AG04449 (cell line): ENCODE measurements at regions of chr3 and their contacts with region 1.

Region 1: GRCh38 chr3:154252759-154253638 is 71.3 kb downstream of the DHX36 start:
- DNase-seq: peak; percentile 42
- H3K4me3 ChIP-seq: no peak overlapping the region
- CTCF ChIP-seq: peak; percentile 90

Region 2: GRCh38 chr3:154095832-154096421 is 157.1 kb before region 1 on chr3:
- CTCF ChIA-PET with region 1: interaction called, 46 read pairs
- POLR2A ChIA-PET with region 1: no interaction called
- DNase-seq: peak; percentile 14
- H3K4me3 ChIP-seq: no peak overlapping the region
- CTCF ChIP-seq: peak; percentile 18

Region 3: DNA sequence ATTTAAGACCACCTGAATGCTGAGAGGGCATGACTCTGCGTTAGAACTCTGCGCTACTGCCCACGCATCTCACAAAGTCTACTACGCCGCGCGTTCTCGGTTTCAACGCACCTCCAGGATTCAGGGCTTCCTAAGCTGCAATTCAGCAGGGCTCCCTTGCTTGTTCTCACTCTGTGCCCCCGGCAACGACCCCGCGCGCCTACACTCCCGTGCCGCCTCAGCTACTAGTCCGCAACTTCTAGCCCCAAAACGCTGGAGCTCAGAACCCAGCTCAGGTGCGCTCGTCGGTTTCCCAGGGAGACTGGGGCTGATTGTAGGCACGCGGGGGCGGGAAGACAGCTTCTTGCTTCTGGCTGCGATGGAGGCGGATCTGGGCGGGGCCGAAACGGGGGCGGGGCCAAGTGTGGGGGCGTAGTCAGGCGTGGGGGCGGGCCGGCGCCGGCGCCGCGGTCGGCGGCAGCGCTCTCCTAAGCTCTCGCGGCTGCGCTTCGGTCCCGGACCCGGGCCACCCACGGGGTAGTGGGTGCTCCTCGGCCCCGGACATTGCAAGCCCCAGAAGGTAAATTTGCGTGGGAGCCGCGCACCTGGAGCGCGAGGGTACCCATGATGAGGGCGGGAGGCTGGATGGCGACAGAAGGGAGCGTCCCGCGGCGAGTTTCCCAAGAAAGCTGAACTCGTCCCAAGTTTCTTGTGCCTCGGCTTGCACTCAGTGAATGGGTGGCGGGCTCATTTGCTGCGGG is 131.9 kb before region 1 on chr3 and contains the start of gene ARHGEF26:
- CTCF ChIA-PET with region 1: interaction called, 12 read pairs
- POLR2A ChIA-PET with region 1: no interaction called
- DNase-seq: no peak
- H3K4me3 ChIP-seq: peak within 1 kb of the TSS; percentile 78
- CTCF ChIP-seq: no peak

Region 4: GRCh38 chr3:154235330-154235729 is 17.7 kb before region 1 on chr3:
- CTCF ChIA-PET with region 1: interaction called, 21 read pairs
- POLR2A ChIA-PET with region 1: no interaction called
- DNase-seq: peak; percentile 4
- H3K4me3 ChIP-seq: no peak overlapping the region
- CTCF ChIP-seq: no peak